AG04450 (cell line): ENCODE measurements at regions of chr9 and their contacts with region 1.

Region 1: DNA sequence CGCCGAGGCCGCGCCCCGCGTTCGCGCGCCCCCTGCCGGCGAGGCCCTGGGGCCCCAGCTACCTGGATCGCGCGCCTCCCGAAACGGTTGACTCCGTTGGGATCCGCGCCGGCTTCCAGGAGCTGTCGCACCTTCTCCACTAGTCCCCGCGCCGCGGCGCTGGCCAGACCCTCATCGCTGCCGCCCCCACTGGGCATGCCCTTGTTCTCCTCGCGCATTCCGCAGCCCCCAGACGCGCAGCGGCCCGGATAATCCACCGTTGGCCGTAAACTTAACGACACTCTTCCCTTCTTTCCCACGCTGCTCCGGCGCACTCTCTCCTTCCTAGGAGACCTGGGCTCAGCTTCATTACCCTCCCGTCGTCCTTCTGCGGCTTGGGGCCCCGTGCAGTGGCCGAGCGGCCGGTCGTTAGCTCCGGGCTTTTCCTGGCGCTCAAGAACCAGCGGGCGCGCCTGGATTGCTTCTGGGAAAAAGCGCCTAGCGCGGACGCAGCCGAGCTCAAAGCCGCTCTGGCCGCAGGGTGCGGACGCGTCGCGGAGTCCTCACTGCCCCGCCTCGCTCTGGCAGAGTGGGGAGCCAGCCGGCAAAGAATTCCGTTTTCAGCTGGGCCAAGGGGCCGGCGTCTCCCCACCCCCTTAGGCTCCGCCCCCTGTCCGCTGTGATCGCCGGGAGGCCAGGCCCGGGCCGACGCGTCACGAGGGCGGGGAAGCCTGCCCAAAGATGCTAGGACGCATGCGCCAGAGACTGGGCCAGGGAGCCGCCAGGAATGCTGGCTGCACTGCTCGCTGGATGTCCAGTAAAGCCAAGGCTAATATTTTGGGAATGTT is at the start of gene CDKN2B:
- DNase-seq: peak; percentile 92
- H3K4me3 ChIP-seq: peak within 1 kb of the TSS; percentile 83
- H3K27ac ChIP-seq: peak within 1 kb of the TSS; percentile 95
- H3K27me3 ChIP-seq: no peaks in the 10 kb centered on the region
- CTCF ChIP-seq: peak; percentile 86
- polyA plus RNA-seq, gene CDKN2B: 10.2 and 10.7 TPM in 2 replicates

Region 2: GRCh38 chr9:21481470-21482056 is 527.4 kb before region 1 on chr9:
- CTCF ChIA-PET with region 1: no interaction called
- POLR2A ChIA-PET with region 1: no interaction called
- DNase-seq: no peak
- H3K4me3 ChIP-seq: no peak overlapping the region
- H3K27ac ChIP-seq: no peak overlapping the region
- H3K27me3 ChIP-seq: no peaks in the 10 kb centered on the region
- CTCF ChIP-seq: no peak

Region 3: DNA sequence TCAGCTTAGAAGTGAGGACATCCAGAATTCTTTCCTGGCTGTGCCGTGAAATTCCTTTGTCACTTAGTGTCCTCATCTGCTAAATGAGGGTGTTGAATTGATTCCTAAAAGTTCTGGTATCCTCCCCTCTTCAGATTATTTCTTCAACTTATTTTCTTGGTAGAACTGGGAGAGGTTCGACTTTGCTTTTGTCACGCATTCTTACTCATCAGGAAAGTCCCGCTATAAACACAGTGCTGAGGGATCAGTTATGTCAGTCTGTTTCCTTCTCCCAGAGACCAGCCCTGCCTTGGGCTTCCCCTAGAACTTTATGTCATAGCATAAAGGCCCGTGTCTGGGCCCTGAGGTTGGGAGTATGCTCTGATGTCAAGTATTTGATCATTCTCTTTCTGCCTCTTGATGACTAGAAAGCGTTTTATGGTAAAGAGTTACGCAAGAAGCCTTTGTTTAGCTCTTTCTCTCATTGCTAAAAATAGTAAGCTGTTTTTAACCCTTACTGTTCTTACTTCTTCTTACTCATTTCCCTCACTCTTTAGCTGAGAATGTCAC is 176.9 kb before region 1 on chr9:
- CTCF ChIA-PET with region 1: interaction called, 21 read pairs
- POLR2A ChIA-PET with region 1: interaction called, 4 read pairs
- DNase-seq: peak; percentile 81
- H3K4me3 ChIP-seq: no peak overlapping the region
- H3K27ac ChIP-seq: peak overlapping the region; percentile 86
- H3K27me3 ChIP-seq: no peaks in the 10 kb centered on the region
- CTCF ChIP-seq: no peak

Region 4: DNA sequence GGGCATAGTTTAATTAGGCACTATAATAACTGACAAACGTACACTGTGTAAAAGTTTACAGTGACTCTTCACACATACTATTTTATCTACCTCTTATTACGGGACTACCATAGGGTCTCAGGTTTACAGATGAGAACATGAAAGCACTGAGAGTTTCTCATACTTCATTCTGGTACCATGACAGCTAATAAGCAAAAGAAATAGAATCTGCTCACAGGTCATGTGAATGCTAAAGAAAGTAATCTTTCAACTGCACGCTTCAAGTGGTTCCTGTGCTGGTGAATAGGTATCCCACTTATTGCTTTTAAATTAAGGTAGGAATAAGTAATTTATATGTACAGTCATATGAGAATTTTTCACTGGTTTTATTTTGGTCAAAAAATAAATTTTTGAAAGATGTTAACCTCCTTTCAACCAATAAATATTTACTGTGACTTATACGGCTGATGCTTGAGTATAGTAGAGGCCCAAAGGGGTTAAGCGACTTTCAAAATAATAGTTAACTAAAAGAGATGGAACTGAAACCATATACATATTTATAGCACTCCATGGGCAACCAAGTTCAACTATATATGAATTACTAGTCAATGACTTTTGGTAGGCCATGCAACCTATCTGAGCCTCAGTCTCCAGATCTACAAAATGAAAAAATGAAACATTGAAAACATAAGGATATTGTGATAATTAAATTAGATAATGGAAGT is 22.8 kb before region 1 on chr9:
- CTCF ChIA-PET with region 1: interaction called, 69 read pairs
- POLR2A ChIA-PET with region 1: interaction called, 5 read pairs
- DNase-seq: no peak
- H3K4me3 ChIP-seq: no peak overlapping the region
- H3K27ac ChIP-seq: no peak overlapping the region
- H3K27me3 ChIP-seq: no peaks in the 10 kb centered on the region
- CTCF ChIP-seq: no peak

Region 5: GRCh38 chr9:22037954-22038690 is 29.2 kb after region 1 on chr9:
- CTCF ChIA-PET with region 1: interaction called, 23 read pairs
- POLR2A ChIA-PET with region 1: interaction called, 3 read pairs
- DNase-seq: no peak
- H3K4me3 ChIP-seq: no peak overlapping the region
- H3K27ac ChIP-seq: no peak overlapping the region
- H3K27me3 ChIP-seq: no peaks in the 10 kb centered on the region
- CTCF ChIP-seq: peak; percentile 61

Region 6: GRCh38 chr9:22111954-22112247 is 103.0 kb after region 1 on chr9:
- CTCF ChIA-PET with region 1: interaction called, 78 read pairs
- POLR2A ChIA-PET with region 1: interaction called, 10 read pairs
- DNase-seq: peak; percentile 39
- H3K4me3 ChIP-seq: no peak overlapping the region
- H3K27ac ChIP-seq: peak overlapping the region; percentile 75
- H3K27me3 ChIP-seq: no peaks in the 10 kb centered on the region
- CTCF ChIP-seq: no peak

Region 7: GRCh38 chr9:22211593-22212360 is 202.8 kb after region 1 on chr9:
- CTCF ChIA-PET with region 1: interaction called, 19 read pairs
- POLR2A ChIA-PET with region 1: interaction called, 8 read pairs
- DNase-seq: peak; percentile 69
- H3K4me3 ChIP-seq: no peak overlapping the region
- H3K27ac ChIP-seq: no peak overlapping the region
- H3K27me3 ChIP-seq: no peaks in the 10 kb centered on the region
- CTCF ChIP-seq: no peak